Naive thymus-derived CD4-positive, alpha-beta T cell (primary cell): ENCODE measurements at regions of chr16 and their contacts with region 1.

Region 1: DNA sequence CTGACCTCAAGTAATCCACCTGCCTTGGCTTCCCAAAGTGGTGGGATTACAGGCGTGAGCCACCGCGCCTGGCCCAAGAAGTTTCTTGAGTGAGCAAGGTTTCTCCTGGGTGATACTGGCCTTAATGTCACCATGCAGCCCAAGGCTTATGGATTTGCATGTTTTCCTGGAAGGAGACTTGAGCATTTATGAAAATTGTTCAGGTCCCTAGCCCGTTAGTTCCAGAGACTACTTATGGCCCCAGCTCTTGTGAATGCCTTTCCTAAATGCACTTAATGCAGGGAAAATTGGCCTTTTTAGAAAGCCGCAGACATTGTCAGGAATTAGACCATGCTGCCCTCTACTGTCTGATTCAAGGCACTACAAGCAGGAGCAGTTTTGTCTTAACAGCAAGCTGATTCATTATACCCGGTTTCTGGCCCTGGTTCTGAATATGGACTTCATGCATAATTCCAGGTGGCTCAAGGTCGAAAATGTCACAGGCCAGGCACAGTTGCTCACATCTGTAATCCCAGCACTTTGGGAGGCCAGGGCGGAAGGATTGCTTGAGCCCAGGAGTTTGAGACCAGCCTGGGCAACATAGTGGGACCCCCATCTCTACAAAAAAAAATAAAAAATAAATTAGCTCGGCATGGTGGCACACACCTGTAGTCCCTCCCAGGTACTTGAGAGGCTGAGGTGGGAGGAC is 91.3 kb downstream of the SNX29 start:
- DNase-seq: peak; percentile 17 to 76 (median 68)
- ATAC-seq: peak; percentile 89
- H3K4me3 ChIP-seq: no peak overlapping the region
- H3K4me3 Mint-ChIP-seq: no peak overlapping the region
- H3K27ac ChIP-seq: no peak overlapping the region
- H3K27ac Mint-ChIP-seq: peak overlapping the region in 3 of 9 donors; percentile 51 to 64 (median 52)
- H3K4me1 ChIP-seq: no peaks in the 10 kb centered on the region
- H3K4me1 Mint-ChIP-seq: peaks cover 0 to 6% (median 5%) of the 10 kb centered on the region in 7 donors
- H3K27me3 ChIP-seq: no peaks in the 10 kb centered on the region
- H3K27me3 Mint-ChIP-seq: no peaks in the 10 kb centered on the region

Region 2: GRCh38 chr16:11396241-11397048 is 671.4 kb before region 1 on chr16:
- CTCF ChIA-PET with region 1: interaction called, 5 read pairs
- POLR2A ChIA-PET with region 1: no interaction called
- intact Hi-C with region 1: loop called in 1 of 2 experiments (anchors 2 kb)
- DNase-seq: peak; percentile 32 to 77 (median 58)
- ATAC-seq: peak; percentile 80
- H3K4me3 ChIP-seq: no peak overlapping the region
- H3K4me3 Mint-ChIP-seq: no peak overlapping the region
- H3K27ac ChIP-seq: no peak overlapping the region
- H3K27ac Mint-ChIP-seq: no peak overlapping the region
- H3K4me1 ChIP-seq: peaks cover 0 to 3% of the 10 kb centered on the region in 2 donors
- H3K4me1 Mint-ChIP-seq: peaks cover 0 to 5% (median 2%) of the 10 kb centered on the region in 7 donors
- H3K27me3 ChIP-seq: no peaks in the 10 kb centered on the region
- H3K27me3 Mint-ChIP-seq: no peaks in the 10 kb centered on the region

Region 3: GRCh38 chr16:11639925-11640899 is 427.6 kb before region 1 on chr16:
- CTCF ChIA-PET with region 1: no interaction called
- POLR2A ChIA-PET with region 1: no interaction called
- intact Hi-C with region 1: loop called in 1 of 2 experiments (anchors 5 kb)
- DNase-seq: no peak
- ATAC-seq: peak; percentile 89
- H3K4me3 ChIP-seq: no peak overlapping the region
- H3K4me3 Mint-ChIP-seq: peak overlapping the region in 2 of 10 donors; percentile 28 to 63
- H3K27ac ChIP-seq: no peak overlapping the region
- H3K27ac Mint-ChIP-seq: peak overlapping the region in 5 of 9 donors; percentile 14 to 82 (median 49)
- H3K4me1 ChIP-seq: peaks cover 11 to 14% of the 10 kb centered on the region in 2 donors
- H3K4me1 Mint-ChIP-seq: peaks cover 15 to 34% (median 22%) of the 10 kb centered on the region in 7 donors
- H3K27me3 ChIP-seq: no peaks in the 10 kb centered on the region
- H3K27me3 Mint-ChIP-seq: peaks cover 0 to 29% (median 0%) of the 10 kb centered on the region in 5 donors

Region 4: DNA sequence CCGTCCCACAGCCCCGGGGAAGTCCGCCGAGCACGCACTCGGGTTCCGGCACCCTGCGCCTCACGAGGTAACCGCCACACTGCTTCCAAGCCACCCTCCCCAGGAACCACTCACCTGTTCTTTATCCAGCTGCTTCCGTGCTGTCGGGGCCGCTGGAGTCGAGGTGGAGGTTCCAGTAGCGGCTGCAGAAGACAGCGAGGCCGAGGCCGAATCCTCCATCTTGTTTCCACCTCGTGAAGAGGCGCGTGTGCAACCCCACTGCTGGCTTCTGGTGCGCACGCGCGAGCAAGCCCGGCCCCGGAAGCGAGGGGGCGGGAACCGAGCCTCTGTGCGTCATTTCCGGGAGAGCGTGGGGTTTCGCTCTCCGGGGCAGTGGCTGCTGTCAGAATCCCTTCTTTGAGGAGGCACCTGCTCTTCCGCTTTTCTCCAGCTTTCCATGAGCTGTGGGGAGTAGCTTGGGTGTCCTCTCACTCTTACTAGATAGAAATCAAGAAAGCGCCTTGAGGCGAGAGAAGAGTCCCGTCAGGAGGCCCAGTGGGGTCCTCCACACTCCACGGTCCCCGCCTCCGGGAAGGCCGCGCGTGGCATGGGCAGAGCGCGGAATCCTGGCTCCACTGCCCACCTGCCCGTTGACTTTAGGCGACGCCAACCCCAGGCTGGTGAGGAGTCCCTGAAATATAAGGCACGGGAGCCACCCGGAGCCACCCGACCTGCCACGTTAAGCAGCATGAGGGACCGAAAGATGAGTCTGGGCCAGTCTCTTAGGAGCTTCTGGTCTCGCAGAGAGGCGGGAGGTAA is 216.4 kb before region 1 on chr16 and contains the start of gene RSL1D1:
- CTCF ChIA-PET with region 1: interaction called, 3 read pairs
- POLR2A ChIA-PET with region 1: no interaction called
- intact Hi-C with region 1: loop called (anchors 2 to 5 kb)
- DNase-seq: peak; percentile 90 to 99 (median 96)
- ATAC-seq: peak; percentile 92
- H3K4me3 ChIP-seq: peak within 1 kb of the TSS; percentile 95
- H3K4me3 Mint-ChIP-seq: peak within 1 kb of the TSS; percentile 94 to 99 (median 99)
- H3K27ac ChIP-seq: peak within 1 kb of the TSS; percentile 89
- H3K27ac Mint-ChIP-seq: peak within 1 kb of the TSS; percentile 91 to 98 (median 97)
- H3K4me1 ChIP-seq: peaks cover 29% of the 10 kb centered on the region in 2 donors
- H3K4me1 Mint-ChIP-seq: peaks cover 32 to 72% (median 63%) of the 10 kb centered on the region in 7 donors
- H3K27me3 ChIP-seq: no peaks in the 10 kb centered on the region
- H3K27me3 Mint-ChIP-seq: no peaks in the 10 kb centered on the region
- total RNA-seq, gene RSL1D1: 141 to 255 (median 219) TPM

Region 5: DNA sequence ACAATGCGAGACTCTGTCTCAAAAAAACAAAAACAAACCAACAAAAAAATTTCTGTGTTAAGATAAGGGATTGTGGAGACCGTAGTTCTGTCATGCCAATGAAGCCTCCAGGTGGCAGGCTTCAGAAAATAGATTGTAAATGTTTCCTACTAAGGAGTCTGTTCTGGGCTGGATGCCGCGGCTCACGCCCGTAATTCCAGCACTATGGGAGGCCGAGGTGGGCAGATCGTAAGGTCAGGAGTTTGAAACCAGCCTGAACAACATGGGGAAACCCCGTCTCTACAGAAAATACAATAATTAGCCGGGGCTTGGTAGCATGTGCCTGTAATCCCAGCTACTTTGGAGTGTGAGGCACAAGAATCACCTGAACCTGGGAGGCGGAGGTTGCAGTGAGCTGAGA is 95.7 kb before region 1 on chr16:
- CTCF ChIA-PET with region 1: interaction called, 5 read pairs
- POLR2A ChIA-PET with region 1: interaction called, 4 read pairs
- intact Hi-C with region 1: loop called (anchors 1 kb)
- DNase-seq: no peak
- ATAC-seq: no peak
- H3K4me3 ChIP-seq: no peak overlapping the region
- H3K4me3 Mint-ChIP-seq: peak overlapping the region in 1 of 10 donors; percentile 16
- H3K27ac ChIP-seq: no peak overlapping the region
- H3K27ac Mint-ChIP-seq: peak overlapping the region in 1 of 9 donors; percentile 32
- H3K4me1 ChIP-seq: peaks cover 3 to 10% of the 10 kb centered on the region in 2 donors
- H3K4me1 Mint-ChIP-seq: peaks cover 9 to 24% (median 16%) of the 10 kb centered on the region in 7 donors
- H3K27me3 ChIP-seq: no peaks in the 10 kb centered on the region
- H3K27me3 Mint-ChIP-seq: no peaks in the 10 kb centered on the region